PC-3 (cell line): ENCODE measurements at regions of chr15 and their contacts with region 1.

Region 1: DNA sequence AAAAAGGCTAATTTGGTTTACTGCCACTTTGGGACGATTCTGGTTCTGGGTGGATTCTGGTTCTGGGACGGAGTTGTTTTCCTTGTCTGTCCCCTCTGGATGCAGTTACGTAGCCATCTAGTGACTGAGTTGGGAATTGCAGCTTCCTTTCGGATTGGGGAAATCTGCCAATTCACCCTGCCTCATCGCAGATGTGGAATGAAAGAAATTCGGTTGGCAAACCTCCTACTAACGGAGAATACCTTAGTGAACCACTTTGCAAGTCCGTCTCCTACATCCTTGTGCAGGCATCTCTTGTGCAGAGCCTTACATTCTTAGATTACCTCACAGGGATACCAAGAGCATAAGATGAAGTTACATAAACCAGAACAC is 31.5 kb upstream of the AP4E1 start:
- DNase-seq: peak; percentile 96
- ATAC-seq: peak; percentile 71
- H3K4me3 ChIP-seq: peak overlapping the region; percentile 69
- H3K27ac ChIP-seq: no peak overlapping the region
- H3K4me1 ChIP-seq: peaks cover 19% of the 10 kb centered on the region
- H3K27me3 ChIP-seq: 0 out of 2 replicates have a peak, but pooled peaks cover 3% of the 10 kb centered on the region
- CTCF ChIP-seq: peak; percentile 91

Region 2: GRCh38 chr15:50675536-50676144 is 201.3 kb before region 1 on chr15:
- CTCF ChIA-PET with region 1: interaction called, 3 read pairs
- POLR2A ChIA-PET with region 1: no interaction called
- intact Hi-C with region 1: loop called (anchors 1 kb)
- DNase-seq: peak; percentile 65
- ATAC-seq: peak; percentile 43; the same call in 1 of the 2 replicates
- H3K4me3 ChIP-seq: no peak overlapping the region
- H3K27ac ChIP-seq: no peak overlapping the region
- H3K4me1 ChIP-seq: no peaks in the 10 kb centered on the region
- H3K27me3 ChIP-seq: no peaks in the 10 kb centered on the region
- CTCF ChIP-seq: peak; percentile 75

Region 3: GRCh38 chr15:50773004-50773773 is 103.8 kb before region 1 on chr15:
- CTCF ChIA-PET with region 1: no interaction called
- POLR2A ChIA-PET with region 1: no interaction called
- intact Hi-C with region 1: no loop called
- DNase-seq: no peak
- ATAC-seq: no peak
- H3K4me3 ChIP-seq: no peak overlapping the region
- H3K27ac ChIP-seq: no peak overlapping the region
- H3K4me1 ChIP-seq: no peaks in the 10 kb centered on the region
- H3K27me3 ChIP-seq: no peaks in the 10 kb centered on the region
- CTCF ChIP-seq: no peak

Region 4: DNA sequence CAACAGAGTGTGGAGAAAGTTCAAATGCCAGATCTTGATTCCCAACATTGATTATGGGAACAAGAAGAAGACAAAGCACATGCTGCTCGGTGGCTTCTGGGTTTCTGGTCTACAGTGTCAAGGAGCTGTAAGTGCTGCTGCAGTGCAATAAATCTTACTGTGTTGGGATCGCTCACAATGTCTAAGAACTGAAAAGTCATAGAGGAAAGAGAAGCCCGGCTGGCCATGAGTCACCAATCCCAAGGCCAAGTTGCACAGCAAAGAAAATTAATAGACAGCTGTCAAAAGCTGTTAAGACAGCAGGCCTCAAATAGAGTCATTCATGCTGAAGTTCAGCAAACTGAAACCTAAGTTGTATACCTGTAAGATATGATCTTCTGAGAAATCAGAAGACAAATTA is 78.3 kb before region 1 on chr15:
- CTCF ChIA-PET with region 1: no interaction called
- POLR2A ChIA-PET with region 1: interaction called, 7 read pairs
- intact Hi-C with region 1: loop called (anchors 1 kb)
- DNase-seq: peak; percentile 61
- ATAC-seq: peak; percentile 92
- H3K4me3 ChIP-seq: no peak overlapping the region; the same call in 1 of the 2 replicates
- H3K27ac ChIP-seq: peak overlapping the region; percentile 35; the same call in 1 of the 2 replicates
- H3K4me1 ChIP-seq: peaks cover 18% of the 10 kb centered on the region
- H3K27me3 ChIP-seq: no peaks in the 10 kb centered on the region
- CTCF ChIP-seq: no peak

Region 5: DNA sequence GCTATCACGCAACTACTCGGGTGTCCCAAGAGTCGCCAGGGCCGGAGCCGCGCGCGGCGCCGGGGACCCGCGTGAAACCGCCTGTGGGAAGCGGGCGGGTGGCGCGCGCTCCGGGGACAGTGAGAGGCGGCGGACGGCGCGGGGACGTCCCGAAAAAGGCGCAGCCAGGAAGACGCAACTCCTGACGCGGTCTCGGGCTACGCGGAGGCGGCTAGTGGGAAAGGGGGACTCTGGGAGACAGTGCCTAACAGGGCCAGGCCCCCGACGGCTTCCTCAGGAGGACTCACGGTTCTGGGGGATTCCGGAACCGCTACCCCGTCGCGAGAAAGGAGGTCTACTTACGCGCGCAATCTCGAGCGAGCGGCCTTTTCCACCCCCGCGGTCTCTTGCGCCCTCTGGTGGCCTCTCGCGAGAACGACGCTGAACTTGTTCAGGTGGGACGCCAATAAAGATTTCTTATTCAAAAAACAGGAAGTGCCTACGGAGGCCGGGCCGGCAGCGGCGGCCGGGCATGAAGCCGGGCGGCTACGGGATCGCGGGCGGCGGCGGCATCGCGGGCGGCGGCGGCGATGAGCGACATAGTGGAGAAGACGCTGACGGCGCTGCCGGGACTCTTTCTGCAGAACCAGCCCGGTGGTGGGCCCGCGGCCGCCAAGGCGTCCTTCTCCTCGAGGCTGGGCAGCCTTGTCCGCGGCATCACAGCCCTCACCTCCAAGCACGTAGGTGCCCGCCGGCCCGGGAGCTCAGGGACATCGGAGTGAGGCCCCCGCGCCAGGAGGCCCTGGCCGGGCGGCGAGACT is 31.4 kb after region 1 on chr15 and contains the start of gene AP4E1:
- CTCF ChIA-PET with region 1: no interaction called
- POLR2A ChIA-PET with region 1: interaction called, 7 read pairs
- intact Hi-C with region 1: loop called (anchors 1 kb)
- DNase-seq: peak; percentile 88
- ATAC-seq: peak; percentile 60
- H3K4me3 ChIP-seq: peak within 1 kb of the TSS; percentile 94
- H3K27ac ChIP-seq: no peak within 1 kb of the TSS
- H3K4me1 ChIP-seq: peaks cover 7% of the 10 kb centered on the region; the same call in 1 of the 2 replicates
- H3K27me3 ChIP-seq: no peaks in the 10 kb centered on the region
- CTCF ChIP-seq: peak; percentile 80
- total RNA-seq, gene AP4E1: 4.7 and 6.0 TPM in 2 replicates